SK-N-SH (cell line): ENCODE measurements at regions of chrX and their contacts with region 1.

Region 1: DNA sequence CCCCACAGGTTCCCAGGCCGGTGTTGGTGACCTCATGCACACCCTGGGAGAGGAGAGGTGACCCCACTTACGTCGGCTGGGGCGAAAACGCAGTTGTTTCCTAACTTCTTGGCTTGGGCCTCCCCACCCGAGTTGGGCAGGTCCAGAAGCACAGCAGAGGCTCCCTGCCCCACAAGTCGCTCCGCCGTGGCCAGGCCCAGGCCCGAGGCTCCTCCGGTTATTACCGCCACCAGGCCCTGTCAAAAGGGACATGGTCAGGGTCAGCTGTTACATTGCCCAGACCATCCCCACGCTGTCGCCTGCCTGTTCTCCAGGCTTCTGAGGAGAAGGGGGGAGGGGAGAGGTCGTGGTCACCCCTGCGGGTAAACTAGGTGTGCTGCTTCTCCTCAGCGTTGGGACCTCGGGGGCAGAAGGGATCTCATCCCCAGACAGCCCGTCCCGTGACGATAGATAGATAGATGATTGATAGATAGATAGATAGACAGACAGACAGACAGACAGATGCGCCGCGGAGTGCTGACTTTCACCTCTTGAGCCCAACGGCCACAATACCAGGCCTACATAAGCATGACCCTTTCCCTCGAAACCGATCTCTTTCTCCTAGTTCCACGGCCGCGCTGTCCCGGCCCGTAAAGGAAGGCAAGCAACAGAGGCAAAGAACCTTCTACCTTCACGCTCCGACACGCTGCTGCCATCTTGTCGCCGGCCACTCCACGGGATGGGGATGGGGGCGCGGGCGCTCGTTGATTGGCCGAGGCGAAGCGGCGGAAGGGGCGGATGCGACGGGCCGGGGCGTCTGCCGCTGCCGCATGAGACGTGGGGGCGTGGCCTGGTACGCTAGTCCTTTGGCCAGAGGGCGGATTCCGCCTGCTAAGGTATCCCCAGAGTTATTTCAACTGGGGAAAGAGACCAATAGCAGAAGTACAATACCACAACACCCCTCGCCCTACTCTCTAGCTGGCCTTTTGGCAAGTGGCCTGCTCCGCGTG is at the start of gene HSD17B10:
- DNase-seq: peak; percentile 95
- H3K4me3 ChIP-seq: peak within 1 kb of the TSS; percentile 97 to 98
- H3K27ac ChIP-seq: peak within 1 kb of the TSS; percentile 35 to 80; a peak in 3 of 4 replicates
- H3K4me1 ChIP-seq: peaks cover 4 to 9% of the 10 kb centered on the region in 2 experiments; a peak in 1 of 4 replicates
- H3K27me3 ChIP-seq: peaks cover 10% of the 10 kb centered on the region; the same call in 1 of the 2 replicates
- CTCF ChIP-seq: no peak
- EP300 ChIP-seq: no peak
- RAD21 ChIP-seq: no peak
- polyA plus RNA-seq, gene HSD17B10: 157 and 188 TPM in 2 replicates

Region 2: DNA sequence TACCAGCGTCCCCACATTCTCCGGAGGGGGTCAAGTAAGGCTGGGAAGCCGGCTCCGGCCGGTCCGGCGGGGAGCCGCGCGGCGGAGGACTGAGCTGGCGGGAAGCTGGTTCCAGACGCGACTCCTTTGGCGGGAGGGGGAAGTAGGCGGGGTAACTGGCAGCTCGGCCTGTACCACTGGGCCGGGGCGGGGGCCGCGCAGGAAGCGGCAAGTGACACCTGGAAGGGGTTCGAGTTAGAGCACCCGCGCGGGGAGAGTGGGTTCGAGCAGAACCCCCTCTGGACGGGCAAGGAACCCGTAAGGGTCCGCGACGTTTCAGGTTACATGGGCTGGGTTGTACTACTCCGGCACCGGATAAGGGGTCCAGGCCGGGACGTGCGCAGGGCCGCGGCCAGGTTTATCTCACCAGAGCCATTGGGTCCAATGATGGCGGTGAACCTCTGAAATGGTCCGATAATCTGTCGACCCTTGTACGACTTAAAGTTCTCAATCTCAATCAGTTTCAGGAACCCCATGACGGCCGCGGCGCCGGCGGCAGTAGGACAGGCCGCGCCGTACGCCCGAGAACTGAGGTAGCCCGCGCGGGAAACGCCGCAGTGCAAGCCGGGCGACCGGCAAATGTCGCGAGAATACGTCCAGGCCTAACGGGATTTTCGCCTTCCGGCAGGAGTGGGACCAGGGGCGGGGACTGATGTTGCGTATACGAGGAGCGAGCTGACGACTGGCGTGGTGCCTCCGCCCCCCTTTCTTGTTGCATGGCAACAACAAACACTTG is 11.7 kb before region 1 on chrX and contains the start of gene SMC1A:
- CTCF ChIA-PET with region 1: interaction called, 20 read pairs
- POLR2A ChIA-PET with region 1: interaction called, 6 read pairs
- DNase-seq: peak; percentile 96
- H3K4me3 ChIP-seq: peak within 1 kb of the TSS; percentile 70 to 85
- H3K27ac ChIP-seq: peak within 1 kb of the TSS; percentile 83 to 87
- H3K4me1 ChIP-seq: peaks cover 5 to 14% of the 10 kb centered on the region in 2 experiments; a peak in 2 of 4 replicates
- H3K27me3 ChIP-seq: no peaks in the 10 kb centered on the region
- CTCF ChIP-seq: no peak
- EP300 ChIP-seq: peak; percentile 33 to 58; a peak in 3 of 4 replicates
- RAD21 ChIP-seq: no peak
- polyA plus RNA-seq, gene SMC1A: 34.6 and 34.9 TPM in 2 replicates

Region 3: GRCh38 chrX:53445977-53446376 is 12.0 kb after region 1 on chrX:
- CTCF ChIA-PET with region 1: interaction called, 10 read pairs
- POLR2A ChIA-PET with region 1: no interaction called
- DNase-seq: peak; percentile 40
- H3K4me3 ChIP-seq: no peak overlapping the region; a peak in 1 of 4 replicates
- H3K27ac ChIP-seq: no peak overlapping the region
- H3K4me1 ChIP-seq: peaks cover 0 to 9% of the 10 kb centered on the region in 2 experiments; a peak in 1 of 4 replicates
- H3K27me3 ChIP-seq: no peaks in the 10 kb centered on the region; the same call in 1 of the 2 replicates
- CTCF ChIP-seq: peak; percentile 70
- EP300 ChIP-seq: no peak
- RAD21 ChIP-seq: peak; percentile 58